ENCODE measurements at regions of chr7 and their contacts with region 1.

Region 1: DNA sequence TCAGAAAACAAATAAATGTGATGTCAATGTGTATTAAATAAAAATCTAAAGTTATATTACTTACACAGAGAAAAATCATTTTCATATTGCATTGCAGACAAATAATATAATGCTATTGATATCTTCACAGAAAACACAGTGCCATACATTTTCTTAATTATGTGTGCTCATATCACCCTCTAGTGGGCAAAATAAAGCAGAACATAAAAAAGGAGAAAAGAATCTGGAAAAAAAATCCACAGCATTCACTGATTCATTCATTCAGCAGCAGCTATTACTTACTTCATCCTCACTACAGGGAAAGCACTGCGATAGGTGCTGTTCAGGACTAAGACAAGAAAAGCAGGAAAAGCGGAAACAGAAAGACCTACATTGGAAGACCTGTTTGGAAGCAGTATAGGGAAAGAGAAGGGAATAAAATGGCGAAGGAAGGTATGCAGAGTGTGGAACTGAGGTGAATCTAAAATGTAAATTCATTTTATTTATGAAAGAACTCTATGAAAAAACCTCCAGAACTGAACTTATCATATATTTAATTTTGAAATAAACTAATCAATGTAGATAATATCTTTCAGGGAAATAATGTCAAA is 73.2 kb downstream of the POT1 start:
- DNase-seq: peak; percentile 32
- ATAC-seq: 0 out of 2 replicates have a peak, but pooled peaks have one; percentile 60
- H3K4me3 ChIP-seq: no peak overlapping the region
- H3K27ac ChIP-seq: no peak overlapping the region
- H3K4me1 ChIP-seq: no peaks in the 10 kb centered on the region
- H3K27me3 ChIP-seq: no peaks in the 10 kb centered on the region
- CTCF ChIP-seq: peak; percentile 45 to 75 (median 56); a peak in 5 of 6 replicates
- POLR2A ChIP-seq: no peak
- RAD21 ChIP-seq: peak; percentile 64

Region 2: DNA sequence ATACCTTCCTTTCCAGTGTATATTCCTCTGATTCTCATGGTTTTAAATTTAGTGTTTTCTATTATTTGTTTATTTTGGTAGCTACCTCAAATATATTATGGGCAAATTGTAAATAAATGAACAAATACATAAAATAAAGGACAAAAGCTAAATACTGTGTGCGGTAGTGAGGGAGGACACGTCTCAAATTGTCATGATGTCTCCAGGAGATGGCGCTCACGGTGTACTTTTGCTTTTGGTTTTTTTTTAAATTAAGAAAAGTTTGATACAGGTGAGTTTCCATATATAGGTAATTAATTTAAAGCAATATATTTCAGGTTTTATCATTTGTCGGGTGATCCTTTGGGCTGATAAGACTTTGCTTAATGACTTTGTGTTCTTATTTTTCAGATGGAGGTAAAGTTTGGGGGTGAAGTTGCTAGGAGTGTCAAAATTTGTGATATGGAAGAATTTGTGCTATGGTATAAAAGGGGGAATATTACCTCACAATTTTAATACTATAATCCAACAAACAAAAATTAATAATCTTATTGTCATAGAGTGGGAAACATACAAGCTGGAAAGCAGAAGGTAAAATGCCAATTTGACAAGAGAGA is 755.1 kb before region 1 on chr7:
- CTCF ChIA-PET with region 1: interaction called, 6 read pairs
- POLR2A ChIA-PET with region 1: no interaction called
- RAD21 ChIA-PET with region 1: no interaction called
- intact Hi-C with region 1: loop called (anchors 1 kb)
- DNase-seq: peak; percentile 28
- ATAC-seq: peak; percentile 58
- H3K4me3 ChIP-seq: no peak overlapping the region
- H3K27ac ChIP-seq: no peak overlapping the region
- H3K4me1 ChIP-seq: no peaks in the 10 kb centered on the region
- H3K27me3 ChIP-seq: no peaks in the 10 kb centered on the region
- CTCF ChIP-seq: peak; percentile 48 to 75 (median 58); a peak in 5 of 6 replicates
- POLR2A ChIP-seq: no peak
- RAD21 ChIP-seq: peak; percentile 77

Region 3: DNA sequence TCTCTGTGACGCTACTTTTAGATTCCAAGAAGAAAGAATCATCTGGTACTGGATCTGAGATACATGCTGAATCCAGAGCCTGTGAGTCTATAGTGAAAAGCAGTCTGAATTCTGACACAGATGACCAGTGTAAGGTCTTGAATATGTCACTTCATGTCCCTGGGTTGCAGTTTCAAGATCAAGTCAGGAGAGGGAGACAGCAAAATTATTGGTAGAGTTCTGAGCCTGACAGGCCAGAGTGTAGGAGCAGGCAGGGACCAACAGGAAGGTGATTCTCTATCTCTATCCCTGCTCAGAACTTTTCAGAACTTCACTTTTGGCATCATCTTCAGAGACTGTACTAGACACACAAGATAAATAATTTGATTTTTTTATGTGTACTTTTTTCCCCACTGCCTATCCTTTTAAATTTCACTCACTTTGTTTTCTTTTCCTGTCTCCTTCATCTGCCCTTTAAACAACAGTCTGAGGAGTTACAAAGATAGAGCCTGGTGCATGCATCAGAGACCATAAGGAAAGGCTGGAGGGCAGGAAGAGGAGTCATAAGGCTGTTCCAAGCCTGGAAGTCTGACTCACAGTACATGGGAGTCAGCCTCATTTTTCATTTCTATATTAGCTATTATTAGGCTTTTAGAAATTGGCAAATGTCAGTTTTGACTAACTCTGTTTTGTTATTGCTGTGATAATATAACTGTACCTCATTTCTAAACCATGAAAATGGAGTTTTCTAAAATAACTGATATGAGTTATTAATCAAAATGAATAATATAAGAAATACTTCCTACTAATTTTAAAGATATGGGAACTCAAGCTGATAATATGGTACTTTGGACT is 703.3 kb before region 1 on chr7:
- CTCF ChIA-PET with region 1: interaction called, 6 read pairs
- POLR2A ChIA-PET with region 1: no interaction called
- RAD21 ChIA-PET with region 1: no interaction called
- intact Hi-C with region 1: loop called (anchors 2 kb)
- DNase-seq: peak; percentile 47
- ATAC-seq: peak; percentile 97
- H3K4me3 ChIP-seq: no peak overlapping the region
- H3K27ac ChIP-seq: no peak overlapping the region
- H3K4me1 ChIP-seq: no peaks in the 10 kb centered on the region
- H3K27me3 ChIP-seq: no peaks in the 10 kb centered on the region
- CTCF ChIP-seq: peak; percentile 44 to 65 (median 52); a peak in 5 of 6 replicates
- POLR2A ChIP-seq: no peak
- RAD21 ChIP-seq: peak; percentile 53

Region 4: DNA sequence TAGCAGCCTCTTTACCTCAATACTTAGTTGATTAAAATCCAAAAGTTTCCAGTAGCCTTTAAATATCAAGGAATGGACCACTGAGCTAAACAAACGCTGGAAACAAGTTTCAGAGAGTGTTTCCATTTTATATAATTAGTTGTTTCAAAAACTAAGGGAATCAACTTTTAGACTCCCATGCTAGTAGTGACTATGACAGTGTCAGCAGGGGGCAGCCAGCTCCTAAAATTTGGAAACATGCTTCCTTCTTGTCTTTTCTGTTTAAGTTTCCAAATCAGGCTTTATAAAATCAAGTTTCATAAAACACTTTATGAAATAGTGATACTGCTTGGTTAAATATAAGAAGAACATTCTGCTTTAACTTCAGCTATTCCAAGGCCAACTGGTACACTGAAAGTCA is 685.3 kb before region 1 on chr7:
- CTCF ChIA-PET with region 1: no interaction called
- POLR2A ChIA-PET with region 1: no interaction called
- RAD21 ChIA-PET with region 1: no interaction called
- intact Hi-C with region 1: loop called (anchors 5 kb)
- DNase-seq: peak; percentile 15
- ATAC-seq: 0 out of 2 replicates have a peak, but pooled peaks have one; percentile 53
- H3K4me3 ChIP-seq: no peak overlapping the region
- H3K27ac ChIP-seq: no peak overlapping the region
- H3K4me1 ChIP-seq: no peaks in the 10 kb centered on the region
- H3K27me3 ChIP-seq: no peaks in the 10 kb centered on the region
- CTCF ChIP-seq: peak; percentile 30 to 49 (median 41); a peak in 4 of 6 replicates
- POLR2A ChIP-seq: no peak
- RAD21 ChIP-seq: peak; percentile 69

Region 5: GRCh38 chr7:124364283-124364682 is 492.1 kb before region 1 on chr7:
- CTCF ChIA-PET with region 1: no interaction called
- POLR2A ChIA-PET with region 1: no interaction called
- RAD21 ChIA-PET with region 1: no interaction called
- intact Hi-C with region 1: no loop called
- DNase-seq: no peak
- ATAC-seq: no peak
- H3K4me3 ChIP-seq: no peak overlapping the region
- H3K27ac ChIP-seq: no peak overlapping the region
- H3K4me1 ChIP-seq: no peaks in the 10 kb centered on the region
- H3K27me3 ChIP-seq: no peaks in the 10 kb centered on the region
- CTCF ChIP-seq: no peak
- POLR2A ChIP-seq: no peak
- RAD21 ChIP-seq: no peak

Region 6: DNA sequence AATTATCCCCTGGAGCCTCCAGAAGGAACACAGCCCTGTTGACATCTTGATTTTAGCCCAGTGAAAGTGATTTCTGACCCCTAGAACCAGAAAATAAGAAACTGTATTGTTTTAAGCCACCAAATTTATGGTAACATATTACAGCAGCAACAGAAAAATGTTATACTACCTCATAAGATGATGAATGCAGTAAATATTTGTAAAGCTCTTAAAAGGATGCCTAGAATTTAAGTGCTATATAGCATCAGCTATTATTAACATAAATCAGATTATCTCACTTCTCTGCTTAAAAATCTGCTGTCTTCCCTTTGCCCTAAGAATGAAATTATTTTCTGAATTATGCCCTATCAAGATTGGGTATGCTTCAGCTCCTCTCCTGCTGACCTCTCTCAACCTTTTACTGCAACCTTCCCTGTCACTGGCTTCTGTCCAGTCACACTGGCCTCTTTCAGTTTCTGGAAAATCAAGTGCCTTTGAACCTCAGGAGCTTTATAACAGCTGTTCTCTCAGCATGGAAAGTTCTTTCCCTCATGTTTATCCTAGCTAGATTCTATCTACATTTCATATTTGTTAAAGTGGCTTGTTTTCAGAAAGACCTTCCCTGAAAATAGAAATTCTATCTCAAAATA is 169.7 kb before region 1 on chr7:
- CTCF ChIA-PET with region 1: no interaction called
- POLR2A ChIA-PET with region 1: no interaction called
- RAD21 ChIA-PET with region 1: no interaction called
- intact Hi-C with region 1: no loop called
- DNase-seq: no peak
- ATAC-seq: no peak
- H3K4me3 ChIP-seq: no peak overlapping the region
- H3K27ac ChIP-seq: no peak overlapping the region
- H3K4me1 ChIP-seq: no peaks in the 10 kb centered on the region
- H3K27me3 ChIP-seq: no peaks in the 10 kb centered on the region
- CTCF ChIP-seq: no peak
- POLR2A ChIP-seq: no peak
- RAD21 ChIP-seq: no peak

Region 7: GRCh38 chr7:125316466-125316865 is 460.1 kb after region 1 on chr7:
- CTCF ChIA-PET with region 1: no interaction called
- POLR2A ChIA-PET with region 1: no interaction called
- RAD21 ChIA-PET with region 1: no interaction called
- intact Hi-C with region 1: loop called (anchors 10 kb)
- DNase-seq: peak; percentile 39
- ATAC-seq: peak; percentile 97
- H3K4me3 ChIP-seq: no peak overlapping the region
- H3K27ac ChIP-seq: no peak overlapping the region
- H3K4me1 ChIP-seq: no peaks in the 10 kb centered on the region
- H3K27me3 ChIP-seq: no peaks in the 10 kb centered on the region
- CTCF ChIP-seq: peak; percentile 36 to 53 (median 45); a peak in 4 of 6 replicates
- POLR2A ChIP-seq: no peak
- RAD21 ChIP-seq: peak; percentile 83

Measured in HCT116 (cell line).